ENCODE measurements at regions of chr15 and their contacts with region 1.

Region 1: GRCh38 chr15:94324117-94324826 is 92.9 kb downstream of the MCTP2 start:
- DNase-seq: peak; percentile 39
- H3K4me3 ChIP-seq: no peak overlapping the region
- H3K27ac ChIP-seq: no peak overlapping the region
- H3K4me1 ChIP-seq: no peaks in the 10 kb centered on the region
- H3K27me3 ChIP-seq: no peaks in the 10 kb centered on the region
- CTCF ChIP-seq: peak; percentile 73 to 93 (median 92)
- POLR2A ChIP-seq: no peak

Region 2: DNA sequence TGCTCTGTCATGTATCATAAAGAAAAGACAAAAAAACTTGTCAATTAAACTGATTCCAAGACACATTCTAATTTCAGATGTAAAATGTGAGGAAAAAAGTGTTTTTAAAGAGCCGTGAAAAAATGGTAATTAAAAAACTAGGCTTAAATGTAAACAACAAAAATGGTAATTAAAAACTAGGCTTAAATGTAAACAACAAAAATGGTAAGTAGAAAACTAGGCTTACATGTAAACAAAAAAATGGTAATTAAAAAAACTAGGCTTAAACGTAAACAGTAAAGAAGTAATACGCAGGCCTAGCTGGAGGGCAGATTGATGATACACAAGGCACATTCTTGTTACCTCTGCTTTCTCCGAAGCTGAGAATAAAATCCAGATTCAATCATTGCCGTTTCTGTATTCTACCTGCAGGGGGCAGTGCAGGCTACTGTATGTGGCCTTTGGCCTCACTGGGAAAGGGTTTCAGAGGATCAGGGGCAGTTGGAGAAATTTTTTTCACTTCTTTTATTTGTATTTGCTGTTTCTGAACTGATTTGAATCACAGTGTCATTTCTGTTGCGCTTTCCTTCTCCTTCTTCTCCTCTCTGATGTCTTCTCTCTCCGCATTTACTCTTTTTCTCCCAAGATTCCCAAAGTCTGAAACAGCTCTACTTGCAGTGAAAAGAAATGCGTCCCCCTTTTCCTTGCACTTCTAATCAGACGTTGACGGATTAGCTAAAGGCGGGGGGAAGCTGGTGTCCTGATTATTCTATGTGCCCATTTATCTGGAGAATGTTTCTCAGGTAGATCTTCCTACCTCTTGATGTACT is 160.1 kb before region 1 on chr15:
- intact Hi-C with region 1: loop called (anchors 10 kb)
- DNase-seq: peak; percentile 49
- H3K4me3 ChIP-seq: no peak overlapping the region
- H3K27ac ChIP-seq: no peak overlapping the region
- H3K4me1 ChIP-seq: no peaks in the 10 kb centered on the region
- H3K27me3 ChIP-seq: no peaks in the 10 kb centered on the region
- CTCF ChIP-seq: peak; percentile 59 to 96 (median 86)
- POLR2A ChIP-seq: no peak

Region 3: DNA sequence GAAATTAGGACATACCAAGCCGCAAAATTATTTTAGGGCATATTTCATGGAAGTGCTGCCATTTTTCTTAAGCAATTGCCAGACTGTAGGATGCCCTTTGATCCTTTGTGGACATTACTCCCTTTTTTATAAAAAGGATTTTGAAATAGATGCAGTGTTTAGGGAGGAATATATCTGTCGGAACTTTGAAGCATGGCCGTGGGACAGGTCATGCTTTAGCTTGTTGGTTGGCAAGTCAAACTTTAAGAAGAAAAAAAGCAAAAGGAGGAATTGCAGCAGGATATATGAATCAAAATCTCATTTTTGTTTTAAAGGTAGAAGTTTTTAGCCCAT is 29.2 kb after region 1 on chr15:
- intact Hi-C with region 1: no loop called
- DNase-seq: no peak
- H3K4me3 ChIP-seq: no peak overlapping the region
- H3K27ac ChIP-seq: no peak overlapping the region
- H3K4me1 ChIP-seq: no peaks in the 10 kb centered on the region
- H3K27me3 ChIP-seq: no peaks in the 10 kb centered on the region
- CTCF ChIP-seq: no peak
- POLR2A ChIP-seq: no peak